Left cardiac atrium (tissue), 4 donors: ENCODE measurements at regions of chr6 and their contacts with region 1.

Region 1: DNA sequence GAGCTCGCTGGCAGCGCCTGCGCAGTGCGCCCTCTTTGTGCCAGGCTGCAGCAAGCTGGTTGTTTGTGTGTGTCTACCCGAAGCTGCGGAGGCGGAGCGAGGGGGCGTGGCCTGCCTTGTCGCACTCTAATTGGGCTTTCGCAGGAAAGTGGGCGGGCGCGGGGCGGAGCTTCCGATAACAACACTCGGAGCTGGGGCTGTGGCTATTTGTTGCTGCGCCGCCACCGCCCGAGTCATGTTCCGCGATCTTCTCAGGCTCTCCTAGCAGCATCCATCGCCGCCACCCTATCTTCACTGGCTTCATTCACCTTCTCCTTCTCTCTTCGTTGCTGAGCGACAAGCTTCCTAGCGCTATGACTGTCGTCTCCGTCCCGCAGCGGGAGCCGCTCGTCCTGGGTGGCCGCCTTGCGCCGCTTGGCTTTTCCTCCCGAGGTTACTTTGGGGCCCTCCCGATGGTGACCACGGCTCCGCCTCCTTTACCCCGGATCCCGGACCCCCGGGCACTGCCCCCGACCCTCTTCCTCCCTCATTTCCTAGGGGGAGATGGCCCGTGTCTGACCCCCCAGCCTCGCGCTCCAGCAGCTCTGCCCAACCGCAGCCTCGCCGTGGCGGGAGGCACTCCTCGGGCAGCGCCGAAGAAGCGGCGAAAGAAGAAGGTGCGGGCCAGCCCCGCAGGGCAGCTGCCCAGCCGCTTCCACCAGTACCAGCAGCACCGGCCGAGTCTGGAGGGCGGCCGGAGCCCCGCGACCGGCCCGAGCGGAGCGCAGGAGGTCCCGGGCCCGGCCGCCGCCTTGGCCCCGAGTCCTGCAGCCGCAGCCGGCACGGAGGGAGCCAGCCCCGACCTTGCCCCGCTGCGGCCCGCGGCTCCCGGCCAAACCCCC is at the start of gene PNRC1:
- DNase-seq: peak; percentile 100
- ATAC-seq: peak; percentile 89 to 90
- total RNA-seq, gene PNRC1: 177 to 202 TPM

Region 2: GRCh38 chr6:89022798-89023197 is 58.0 kb before region 1 on chr6:
- intact Hi-C with region 1: loop called in 1 of 2 experiments (anchors 5 kb)
- DNase-seq: no peak
- ATAC-seq: peak; percentile 15 to 37

Region 3: DNA sequence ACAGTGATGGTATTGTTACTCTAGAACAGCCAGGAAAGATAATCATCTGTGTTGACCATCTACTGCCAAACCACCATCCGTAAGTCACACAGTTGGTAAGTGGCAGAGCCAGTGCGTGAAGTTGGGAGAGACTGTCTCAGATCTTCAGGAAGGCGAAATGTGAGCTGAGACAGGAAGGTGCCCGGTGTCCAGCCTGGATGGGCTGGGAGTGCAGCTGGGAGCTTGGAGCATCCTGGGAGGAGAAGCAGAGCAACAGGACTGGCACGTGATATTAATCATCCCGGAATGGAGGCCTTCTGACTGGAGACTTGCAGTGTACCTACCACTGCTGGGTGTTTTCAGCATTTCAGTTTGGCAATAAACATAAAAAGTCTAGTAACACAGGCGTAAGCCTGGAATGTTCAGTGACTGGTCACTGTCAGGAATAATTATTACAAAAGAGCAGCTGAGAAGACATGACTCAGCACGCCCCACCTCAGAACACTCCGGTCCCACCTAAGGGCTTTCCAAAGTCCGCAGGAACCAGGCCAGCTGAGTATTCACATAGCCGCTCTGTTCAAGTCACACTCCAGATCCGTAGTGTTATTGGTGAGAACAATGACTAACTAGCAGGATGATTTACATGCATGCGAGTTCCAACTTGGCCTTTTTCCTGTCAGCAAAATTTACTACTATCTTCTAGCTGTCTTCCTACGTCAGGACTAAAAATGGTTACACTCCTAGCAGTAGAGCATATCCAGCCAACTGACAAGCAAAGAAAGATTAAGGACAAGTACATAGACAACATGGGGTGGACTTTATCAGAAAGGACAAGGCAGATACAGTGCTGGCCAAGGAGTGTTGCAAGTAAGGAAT is 45.3 kb before region 1 on chr6:
- intact Hi-C with region 1: loop called in 1 of 2 experiments (anchors 5 kb)
- DNase-seq: peak; percentile 93
- ATAC-seq: peak; percentile 93 to 94

Region 4: GRCh38 chr6:89117211-89118108 is 36.7 kb after region 1 on chr6 and contains the start of gene SRSF12:
- intact Hi-C with region 1: no loop called
- DNase-seq: peak; percentile 47
- ATAC-seq: peak; percentile 85 to 93
- total RNA-seq, gene SRSF12: 0.09 to 0.65 TPM

Region 5: GRCh38 chr6:89161326-89162046 is 80.7 kb after region 1 on chr6:
- intact Hi-C with region 1: no loop called
- DNase-seq: no peak
- ATAC-seq: peak; percentile 77 to 84

Region 6: GRCh38 chr6:89352278-89353117 is 271.7 kb after region 1 on chr6 and contains the start of gene UBE2J1:
- intact Hi-C with region 1: loop called in 1 of 2 experiments (anchors 5 kb)
- DNase-seq: peak; percentile 97
- ATAC-seq: peak; percentile 97 to 98
- total RNA-seq, gene UBE2J1: 15.6 to 26.1 TPM